Endothelial cell of umbilical vein (primary cell): ENCODE measurements at regions of chr1 and their contacts with region 1.

Region 1: DNA sequence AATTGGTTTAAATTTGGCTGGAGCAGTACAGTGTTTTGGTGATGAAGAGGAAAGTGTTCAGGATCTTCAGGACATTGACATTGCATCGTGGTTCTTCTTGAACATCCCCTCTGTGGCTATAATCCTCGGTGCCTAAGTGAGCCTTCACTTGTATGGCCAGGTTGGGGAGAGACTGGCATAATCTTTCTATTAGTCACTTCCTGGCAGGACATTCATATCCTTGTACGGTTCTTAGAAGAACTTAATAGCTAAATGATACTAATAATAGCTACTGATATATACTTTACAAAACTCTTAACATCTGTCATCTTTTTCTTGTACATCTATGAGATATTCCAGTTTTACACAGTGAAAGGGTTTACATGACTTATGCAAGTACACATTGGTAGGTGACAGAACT is 35.8 kb downstream of the CELF3 start:
- DNase-seq: peak; percentile 88
- H3K4me3 ChIP-seq: peak overlapping the region in 1 of 3 experiments; percentile 37
- H3K27ac ChIP-seq: peak overlapping the region; percentile 91
- H3K4me1 ChIP-seq: peaks cover 25% of the 10 kb centered on the region
- H3K27me3 ChIP-seq: no peaks in the 10 kb centered on the region
- CTCF ChIP-seq: no peak
- POLR2A ChIP-seq: peak; percentile 36

Region 2: DNA sequence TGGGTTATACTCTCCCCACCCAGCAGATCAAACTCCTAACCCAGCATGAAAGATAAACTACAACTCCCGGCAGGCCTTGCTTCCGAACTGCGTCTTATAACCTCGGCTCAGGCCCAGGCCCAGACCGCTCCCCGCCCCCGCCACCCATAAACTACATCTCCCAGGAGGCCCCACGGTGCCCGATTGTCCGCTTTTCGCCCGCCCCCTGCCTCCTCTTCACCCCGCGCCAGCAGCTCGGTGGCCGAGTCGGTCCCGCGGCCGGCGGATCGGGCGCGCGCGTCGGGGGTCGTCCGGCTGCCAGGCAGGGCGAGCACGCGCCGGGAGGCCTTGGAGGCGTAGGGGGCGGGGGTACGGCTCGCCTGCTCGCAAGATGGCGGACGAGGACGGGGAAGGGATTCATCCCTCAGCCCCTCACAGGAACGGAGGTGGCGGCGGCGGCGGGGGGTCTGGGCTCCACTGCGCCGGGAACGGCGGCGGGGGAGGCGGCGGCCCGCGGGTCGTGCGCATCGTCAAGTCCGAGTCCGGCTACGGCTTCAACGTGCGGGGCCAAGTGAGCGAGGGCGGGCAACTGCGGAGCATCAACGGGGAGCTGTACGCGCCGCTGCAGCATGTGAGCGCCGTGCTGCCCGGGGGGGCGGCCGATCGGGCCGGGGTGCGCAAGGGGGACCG is 68.8 kb before region 1 on chr1 and contains the start of gene SNX27:
- CTCF ChIA-PET with region 1: no interaction called
- POLR2A ChIA-PET with region 1: no interaction called
- dilution Hi-C with region 1: no loop called
- intact Hi-C with region 1: loop called (anchors 2 kb)
- DNase-seq: peak; percentile 95
- H3K4me3 ChIP-seq: peak within 1 kb of the TSS; percentile 83 to 93 (median 84)
- H3K27ac ChIP-seq: peak within 1 kb of the TSS; percentile 41
- H3K4me1 ChIP-seq: peaks cover 8% of the 10 kb centered on the region
- H3K27me3 ChIP-seq: no peaks in the 10 kb centered on the region
- CTCF ChIP-seq: no peak
- POLR2A ChIP-seq: peak; percentile 30
- total RNA-seq, gene SNX27: 24.5 and 24.9 TPM in 2 replicates

Region 3: DNA sequence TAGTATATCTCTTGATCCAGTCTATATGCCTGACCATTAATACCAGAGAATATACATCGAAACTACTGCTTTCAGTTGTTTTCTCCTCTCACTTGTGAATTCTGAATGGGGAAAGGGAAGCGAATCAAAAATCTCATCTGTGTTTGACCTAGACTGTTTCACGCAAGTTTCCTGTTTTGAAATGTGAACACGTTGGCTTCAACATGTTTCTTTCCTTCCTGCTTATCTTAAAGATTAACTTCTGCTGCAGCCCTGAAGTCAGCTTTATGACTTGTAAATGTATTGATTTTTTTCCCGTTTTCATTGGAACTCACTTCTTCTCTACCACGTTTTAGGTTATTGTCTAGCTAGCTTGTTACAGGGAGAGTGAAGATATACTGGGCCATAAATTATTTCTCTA is 19.1 kb before region 1 on chr1:
- CTCF ChIA-PET with region 1: no interaction called
- POLR2A ChIA-PET with region 1: no interaction called
- dilution Hi-C with region 1: no loop called
- intact Hi-C with region 1: no loop called
- DNase-seq: peak; percentile 68
- H3K4me3 ChIP-seq: no peak overlapping the region
- H3K27ac ChIP-seq: no peak overlapping the region
- H3K4me1 ChIP-seq: peaks cover 9% of the 10 kb centered on the region
- H3K27me3 ChIP-seq: no peaks in the 10 kb centered on the region
- CTCF ChIP-seq: no peak
- POLR2A ChIP-seq: no peak